ENCODE measurements at regions of chr2 and their contacts with region 1.

Region 1: DNA sequence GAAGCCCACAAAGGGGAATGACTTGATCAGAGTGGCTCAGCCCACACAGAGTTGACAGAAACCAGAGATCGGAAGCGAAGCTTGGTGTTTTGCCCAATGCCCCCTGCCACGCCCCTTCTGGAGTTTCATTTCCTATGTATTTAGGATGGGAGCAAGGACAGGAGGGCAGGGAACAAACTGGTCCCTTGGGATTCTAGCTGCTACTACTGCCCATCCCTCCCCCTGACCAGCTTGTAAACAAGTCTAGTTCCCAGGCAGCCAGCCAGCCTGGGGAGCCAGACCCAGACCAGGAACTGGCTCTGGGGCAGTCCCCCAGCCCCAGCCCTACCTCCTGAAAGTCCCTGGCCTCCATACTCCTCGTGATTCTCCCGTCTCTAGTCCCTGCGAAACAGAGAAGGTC is 8.3 kb downstream of the WNT6 start:
- DNase-seq: no peak
- ATAC-seq: no peak
- H3K4me3 ChIP-seq: no peak overlapping the region
- H3K4me3 Mint-ChIP-seq: no peak overlapping the region
- H3K27ac ChIP-seq: no peak overlapping the region
- H3K27ac Mint-ChIP-seq: no peak overlapping the region
- H3K4me1 ChIP-seq: peaks cover 22% of the 10 kb centered on the region
- H3K4me1 Mint-ChIP-seq: peaks cover 0 to 11% of the 10 kb centered on the region in 2 donors
- H3K27me3 ChIP-seq: peaks cover 16% of the 10 kb centered on the region
- H3K27me3 Mint-ChIP-seq: peaks cover 64 to 69% of the 10 kb centered on the region in 2 donors
- CTCF ChIP-seq: no peak

Region 2: DNA sequence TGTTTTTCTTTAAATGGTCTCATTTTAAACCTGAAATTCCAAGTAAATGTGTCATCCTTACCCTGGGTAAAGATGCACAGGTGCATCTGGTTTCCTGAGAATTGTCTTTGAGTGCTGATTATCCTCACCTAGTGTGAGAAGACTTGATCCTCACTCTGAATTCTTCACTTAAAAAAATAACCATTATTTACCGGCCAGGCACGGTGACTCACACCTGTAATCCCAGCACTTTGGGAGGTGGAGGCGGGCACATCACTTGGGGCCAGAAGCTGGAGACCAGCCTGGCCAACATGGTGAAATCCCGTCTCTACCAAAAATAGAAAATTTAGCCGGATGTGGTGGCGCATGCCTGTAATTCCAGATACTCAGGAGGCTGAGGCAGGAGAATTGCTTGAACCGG is 18.2 kb before region 1 on chr2:
- intact Hi-C with region 1: no loop called
- DNase-seq: no peak
- ATAC-seq: no peak
- H3K4me3 ChIP-seq: no peak overlapping the region
- H3K4me3 Mint-ChIP-seq: no peak overlapping the region
- H3K27ac ChIP-seq: no peak overlapping the region
- H3K27ac Mint-ChIP-seq: no peak overlapping the region
- H3K4me1 ChIP-seq: peaks cover 2% of the 10 kb centered on the region
- H3K4me1 Mint-ChIP-seq: peaks cover 0 to 5% of the 10 kb centered on the region in 2 donors
- H3K27me3 ChIP-seq: peaks cover 13% of the 10 kb centered on the region
- H3K27me3 Mint-ChIP-seq: peaks cover 20 to 22% of the 10 kb centered on the region in 2 donors
- CTCF ChIP-seq: no peak

Region 3: DNA sequence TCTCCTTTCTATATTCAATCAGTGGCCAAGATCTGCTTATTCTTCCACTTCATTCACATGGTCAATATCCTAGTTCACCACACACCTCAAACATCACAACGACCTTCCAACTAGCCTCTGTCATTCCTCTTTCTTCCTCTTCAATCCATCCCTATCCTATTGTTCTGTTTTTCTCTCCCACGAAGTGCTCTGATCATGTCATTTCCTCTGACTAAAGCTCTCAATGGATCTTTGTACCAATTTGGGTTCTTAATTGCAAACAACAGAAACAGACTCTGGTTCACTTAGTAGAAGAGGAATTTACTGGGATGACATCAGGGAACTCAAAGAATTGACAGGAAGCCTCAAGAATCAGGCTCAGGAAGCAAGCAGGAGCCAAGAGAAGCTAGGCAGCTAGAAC is 36.3 kb after region 1 on chr2:
- intact Hi-C with region 1: loop called (anchors 5 kb)
- DNase-seq: no peak
- ATAC-seq: no peak
- H3K4me3 ChIP-seq: no peak overlapping the region
- H3K4me3 Mint-ChIP-seq: no peak overlapping the region
- H3K27ac ChIP-seq: no peak overlapping the region
- H3K27ac Mint-ChIP-seq: no peak overlapping the region
- H3K4me1 ChIP-seq: peaks cover 9% of the 10 kb centered on the region
- H3K4me1 Mint-ChIP-seq: peaks cover 0 to 9% of the 10 kb centered on the region in 2 donors
- H3K27me3 ChIP-seq: peaks cover 12% of the 10 kb centered on the region
- H3K27me3 Mint-ChIP-seq: peaks cover 44% of the 10 kb centered on the region in 2 donors
- CTCF ChIP-seq: no peak

Measured in natural killer cell (primary cell).